Mammary epithelial cell (primary cell): ENCODE measurements at regions of chr6 and their contacts with region 1.

Region 1: DNA sequence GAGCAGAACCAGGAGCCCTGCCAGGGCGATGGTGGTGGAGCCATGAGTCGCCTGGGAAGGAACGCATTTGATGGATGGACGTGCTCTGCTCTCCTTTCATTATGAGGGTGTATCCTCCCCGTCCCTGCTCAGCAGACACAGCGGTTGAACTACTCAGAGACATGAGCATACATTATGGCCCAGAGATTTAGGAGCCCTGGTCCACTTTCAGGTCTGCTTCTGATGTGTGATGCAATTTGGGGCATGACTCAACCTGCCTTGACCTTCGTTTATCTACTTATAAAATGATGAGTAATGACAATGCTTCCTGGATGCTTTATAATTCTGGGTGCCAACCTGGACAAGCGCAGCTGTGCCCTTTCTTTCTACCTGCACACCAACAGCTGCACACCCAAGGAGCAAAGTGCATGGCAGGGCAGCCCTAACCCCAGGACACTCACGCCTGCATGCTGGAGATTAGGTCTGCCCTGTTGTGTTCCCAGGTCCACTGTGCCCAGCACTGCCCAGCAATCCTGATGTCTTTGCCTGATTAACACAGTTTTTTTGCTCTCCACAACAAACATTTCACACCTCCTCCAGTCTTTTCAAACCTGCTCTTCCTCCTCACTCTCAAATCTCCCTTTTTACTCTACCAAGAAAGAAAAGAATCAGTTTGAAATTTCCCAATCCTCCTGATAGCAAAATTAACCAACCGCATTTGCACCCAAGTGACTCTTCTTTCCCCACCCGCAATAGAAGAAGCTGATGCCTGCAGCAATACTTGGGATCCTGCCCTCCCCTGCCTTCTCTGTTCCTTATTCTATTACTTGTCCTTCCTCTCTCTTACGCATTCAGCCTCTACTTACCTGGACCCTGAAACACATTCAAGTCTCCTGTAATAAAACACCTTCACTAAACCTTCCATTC is 81.2 kb downstream of the EZR start:
- DNase-seq: peak; percentile 83
- H3K4me3 ChIP-seq: no peak overlapping the region
- H3K27ac ChIP-seq: peak overlapping the region; percentile 0
- H3K4me1 ChIP-seq: peaks cover 23% of the 10 kb centered on the region
- H3K27me3 ChIP-seq: no peaks in the 10 kb centered on the region
- CTCF ChIP-seq: no peak

Region 2: DNA sequence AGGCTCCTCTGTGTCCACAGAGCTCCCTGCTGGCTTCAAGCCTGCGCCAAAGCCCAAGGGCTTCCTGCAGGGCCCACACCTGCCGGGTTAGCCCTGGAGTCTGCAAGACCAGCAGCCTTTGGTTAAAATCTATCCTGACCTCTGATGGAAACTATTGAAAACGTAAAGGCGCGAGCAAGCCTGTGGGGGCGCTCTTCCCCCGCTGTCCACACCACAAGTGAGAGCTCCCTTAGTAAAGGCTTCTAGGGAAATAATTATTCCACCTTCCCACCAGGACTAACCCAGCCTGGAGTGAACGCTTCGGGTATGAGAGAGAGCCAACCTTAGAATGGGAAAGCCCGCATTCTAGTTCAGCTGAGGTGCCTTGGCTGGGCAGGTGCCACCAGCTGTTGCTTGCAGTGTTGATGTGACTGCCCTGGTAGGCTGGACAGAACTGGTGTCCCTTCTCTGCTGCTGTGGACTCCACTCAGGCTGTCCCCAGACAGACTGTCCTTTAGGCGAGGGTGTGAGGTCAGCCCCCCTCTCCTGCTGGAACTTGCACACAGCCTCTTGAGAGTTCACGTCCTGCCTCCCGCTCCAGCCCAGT is 19.4 kb before region 1 on chr6:
- CTCF ChIA-PET with region 1: no interaction called
- dilution Hi-C with region 1: no loop called
- in situ Hi-C with region 1: no loop called
- intact Hi-C with region 1: loop called (anchors 1 kb)
- DNase-seq: no peak
- H3K4me3 ChIP-seq: no peak overlapping the region
- H3K27ac ChIP-seq: no peak overlapping the region
- H3K4me1 ChIP-seq: peaks cover 15% of the 10 kb centered on the region
- H3K27me3 ChIP-seq: no peaks in the 10 kb centered on the region
- CTCF ChIP-seq: peak; percentile 34 to 55

Region 3: DNA sequence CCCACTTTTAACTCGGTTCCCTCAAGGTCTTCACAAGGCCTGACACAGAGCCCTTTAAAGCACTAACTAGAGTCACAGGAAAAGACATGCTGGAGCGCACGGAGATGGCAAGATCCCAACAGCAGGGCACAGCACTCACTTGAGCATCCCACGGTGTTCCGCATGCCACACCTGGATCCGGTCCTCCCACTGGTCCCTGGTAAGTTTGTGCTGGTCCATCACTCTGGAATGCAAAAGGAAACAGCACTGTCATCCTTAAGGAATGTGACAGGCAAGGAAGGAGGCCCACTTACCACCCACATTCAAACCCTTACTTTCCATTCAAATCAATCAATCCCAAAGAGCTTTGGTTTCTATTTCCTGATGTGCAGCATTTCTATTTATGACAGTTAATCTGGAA is 46.5 kb after region 1 on chr6:
- CTCF ChIA-PET with region 1: no interaction called
- dilution Hi-C with region 1: no loop called
- in situ Hi-C with region 1: no loop called
- intact Hi-C with region 1: loop called (anchors 5 kb)
- DNase-seq: peak; percentile 83
- H3K4me3 ChIP-seq: no peak overlapping the region
- H3K27ac ChIP-seq: peak overlapping the region; percentile 52
- H3K4me1 ChIP-seq: peaks cover 67% of the 10 kb centered on the region
- H3K27me3 ChIP-seq: no peaks in the 10 kb centered on the region
- CTCF ChIP-seq: no peak

Region 4: GRCh38 chr6:158837684-158838625 is 100.0 kb after region 1 on chr6:
- CTCF ChIA-PET with region 1: no interaction called
- dilution Hi-C with region 1: no loop called
- in situ Hi-C with region 1: no loop called
- intact Hi-C with region 1: no loop called
- DNase-seq: peak; percentile 88
- H3K4me3 ChIP-seq: no peak overlapping the region
- H3K27ac ChIP-seq: peak overlapping the region; percentile 80
- H3K4me1 ChIP-seq: peaks cover 17% of the 10 kb centered on the region
- H3K27me3 ChIP-seq: no peaks in the 10 kb centered on the region
- CTCF ChIP-seq: no peak